ENCODE measurements at regions of chr20 and their contacts with region 1.

Region 1: GRCh38 chr20:34522969-34523871 is 7.0 kb downstream of the DYNLRB1 start:
- DNase-seq: peak; percentile 84
- H3K4me3 Mint-ChIP-seq: no peak overlapping the region
- H3K27ac Mint-ChIP-seq: peak overlapping the region; percentile 39
- H3K4me1 Mint-ChIP-seq: peaks cover 71% of the 10 kb centered on the region
- H3K27me3 Mint-ChIP-seq: no peaks in the 10 kb centered on the region
- CTCF ChIP-seq: peak; percentile 88

Region 2: GRCh38 chr20:33674295-33675135 is 848.7 kb before region 1 on chr20 and contains the start of gene NECAB3:
- CTCF ChIA-PET with region 1: no interaction called
- intact Hi-C with region 1: no loop called
- DNase-seq: peak; percentile 95
- H3K4me3 Mint-ChIP-seq: peak within 1 kb of the TSS; percentile 94
- H3K27ac Mint-ChIP-seq: peak within 1 kb of the TSS; percentile 68
- H3K4me1 Mint-ChIP-seq: peaks cover 18% of the 10 kb centered on the region
- H3K27me3 Mint-ChIP-seq: no peaks in the 10 kb centered on the region
- CTCF ChIP-seq: no peak
- total RNA-seq, gene NECAB3: 65.5 and 80.8 TPM in 2 replicates

Region 3: GRCh38 chr20:34302723-34303528 is 220.3 kb before region 1 on chr20 and contains the start of gene AHCY:
- CTCF ChIA-PET with region 1: interaction called, 10 read pairs
- intact Hi-C with region 1: no loop called
- DNase-seq: peak; percentile 100
- H3K4me3 Mint-ChIP-seq: peak within 1 kb of the TSS; percentile 91
- H3K27ac Mint-ChIP-seq: peak within 1 kb of the TSS; percentile 89
- H3K4me1 Mint-ChIP-seq: no peaks in the 10 kb centered on the region
- H3K27me3 Mint-ChIP-seq: no peaks in the 10 kb centered on the region
- CTCF ChIP-seq: peak; percentile 7
- total RNA-seq, gene AHCY: 169 and 179 TPM in 2 replicates

Region 4: DNA sequence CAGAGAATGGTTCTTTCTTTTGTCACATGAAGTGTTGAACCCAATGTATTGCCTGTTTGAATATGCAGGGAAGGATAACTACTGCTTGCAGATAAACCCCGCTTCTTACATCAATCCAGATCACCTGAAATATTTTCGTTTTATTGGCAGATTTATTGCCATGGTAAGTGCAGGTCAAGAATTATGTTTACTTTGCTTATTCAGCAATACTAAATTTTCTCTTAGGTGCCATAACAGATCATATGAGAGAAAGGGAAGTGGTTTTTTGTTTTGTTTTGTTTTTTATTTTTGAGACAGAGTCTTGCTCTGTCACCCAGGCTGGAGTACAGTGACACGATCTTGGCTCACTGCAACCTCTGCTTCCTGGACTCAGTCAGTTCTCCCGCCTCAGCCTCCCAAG is 43.6 kb before region 1 on chr20:
- CTCF ChIA-PET with region 1: no interaction called
- intact Hi-C with region 1: loop called (anchors 5 kb)
- DNase-seq: no peak
- H3K4me3 Mint-ChIP-seq: no peak overlapping the region
- H3K27ac Mint-ChIP-seq: no peak overlapping the region
- H3K4me1 Mint-ChIP-seq: no peaks in the 10 kb centered on the region
- H3K27me3 Mint-ChIP-seq: no peaks in the 10 kb centered on the region
- CTCF ChIP-seq: no peak

Region 5: GRCh38 chr20:34604980-34605788 is 82.0 kb after region 1 on chr20:
- CTCF ChIA-PET with region 1: no interaction called
- intact Hi-C with region 1: no loop called
- DNase-seq: no peak
- H3K4me3 Mint-ChIP-seq: no peak overlapping the region
- H3K27ac Mint-ChIP-seq: no peak overlapping the region
- H3K4me1 Mint-ChIP-seq: no peaks in the 10 kb centered on the region
- H3K27me3 Mint-ChIP-seq: no peaks in the 10 kb centered on the region
- CTCF ChIP-seq: no peak

Region 6: DNA sequence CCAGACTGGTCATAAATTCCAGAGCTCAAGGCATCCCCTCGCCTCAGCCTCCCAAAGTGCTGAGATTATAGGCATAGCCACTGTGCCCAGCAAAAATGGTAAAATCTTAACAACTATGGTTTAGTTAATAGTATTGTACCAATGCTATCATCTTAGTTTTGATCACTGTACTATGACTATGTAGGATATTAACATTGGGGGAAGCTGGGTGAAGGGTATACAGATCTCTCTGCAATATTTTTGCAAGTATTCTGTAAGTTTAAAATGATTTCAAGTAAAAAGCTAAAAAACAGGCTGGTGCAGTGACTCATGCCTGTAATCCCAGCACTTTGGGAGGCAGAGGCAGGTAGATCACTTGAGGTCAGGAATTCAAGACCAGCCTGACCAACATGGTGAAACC is 145.9 kb after region 1 on chr20:
- CTCF ChIA-PET with region 1: no interaction called
- intact Hi-C with region 1: no loop called
- DNase-seq: no peak
- H3K4me3 Mint-ChIP-seq: no peak overlapping the region
- H3K27ac Mint-ChIP-seq: no peak overlapping the region
- H3K4me1 Mint-ChIP-seq: no peaks in the 10 kb centered on the region
- H3K27me3 Mint-ChIP-seq: no peaks in the 10 kb centered on the region
- CTCF ChIP-seq: no peak

Region 7: GRCh38 chr20:34704177-34705007 is 181.2 kb after region 1 on chr20 and contains the start of gene TP53INP2:
- CTCF ChIA-PET with region 1: no interaction called
- intact Hi-C with region 1: no loop called
- DNase-seq: peak; percentile 91
- H3K4me3 Mint-ChIP-seq: peak within 1 kb of the TSS; percentile 90
- H3K27ac Mint-ChIP-seq: peak within 1 kb of the TSS; percentile 97
- H3K4me1 Mint-ChIP-seq: peaks cover 26% of the 10 kb centered on the region
- H3K27me3 Mint-ChIP-seq: peaks cover 30% of the 10 kb centered on the region
- CTCF ChIP-seq: no peak
- total RNA-seq, gene TP53INP2: 5.0 and 5.2 TPM in 2 replicates

Measured in Calu3 (cell line).